CD14-positive monocyte (primary cell): ENCODE measurements at regions of chr17 and their contacts with region 1.

Region 1: DNA sequence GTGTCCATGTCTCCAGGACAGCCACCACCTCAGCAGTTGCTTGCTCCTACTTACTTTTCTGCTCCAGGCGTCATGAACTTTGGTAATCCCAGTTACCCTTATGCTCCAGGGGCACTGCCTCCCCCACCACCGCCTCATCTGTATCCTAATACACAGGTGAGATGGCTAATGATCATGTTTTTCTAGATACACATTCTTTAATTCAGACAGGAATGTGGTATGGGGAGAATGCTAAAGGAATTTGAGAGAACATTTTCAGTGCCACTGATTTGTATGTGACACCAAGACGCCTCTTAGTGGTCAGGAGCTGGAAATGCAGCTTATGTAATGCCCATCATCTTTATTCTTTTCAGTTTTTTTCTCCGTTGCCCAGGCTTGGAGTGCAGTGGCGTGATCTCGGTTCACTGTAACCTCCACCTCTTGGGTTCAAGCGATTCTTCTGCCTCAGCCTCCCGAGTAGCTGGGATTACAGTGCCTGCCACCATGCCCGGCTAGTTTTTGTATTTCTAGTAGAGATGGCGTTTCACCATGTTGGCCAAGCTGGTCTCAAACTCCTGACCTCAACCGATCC is 8.9 kb upstream of the RAPGEFL1 start:
- DNase-seq: peak; percentile 44 to 64 (median 62)
- H3K4me3 ChIP-seq: no peak overlapping the region
- H3K4me3 Mint-ChIP-seq: no peak overlapping the region
- H3K27ac ChIP-seq: peak overlapping the region; percentile 21 to 33
- H3K27ac Mint-ChIP-seq: peak overlapping the region in 6 of 7 donors; percentile 46 to 82 (median 80)
- H3K4me1 ChIP-seq: no peaks in the 10 kb centered on the region
- H3K4me1 Mint-ChIP-seq: peaks cover 2% of the 10 kb centered on the region
- H3K27me3 ChIP-seq: no peaks in the 10 kb centered on the region
- H3K27me3 Mint-ChIP-seq: no peaks in the 10 kb centered on the region
- CTCF ChIP-seq: peak; percentile 87

Region 2: GRCh38 chr17:40019140-40019991 is 149.0 kb before region 1 on chr17:
- intact Hi-C with region 1: loop called (anchors 5 to 10 kb)
- DNase-seq: no peak
- H3K4me3 ChIP-seq: no peak overlapping the region
- H3K4me3 Mint-ChIP-seq: no peak overlapping the region
- H3K27ac ChIP-seq: no peak overlapping the region
- H3K27ac Mint-ChIP-seq: peak overlapping the region in 4 of 7 donors; percentile 30 to 64 (median 48)
- H3K4me1 ChIP-seq: no peaks in the 10 kb centered on the region
- H3K4me1 Mint-ChIP-seq: peaks cover 1% of the 10 kb centered on the region
- H3K27me3 ChIP-seq: no peaks in the 10 kb centered on the region
- H3K27me3 Mint-ChIP-seq: peaks cover 2 to 12% (median 3%) of the 10 kb centered on the region in 3 donors
- CTCF ChIP-seq: no peak

Region 3: GRCh38 chr17:40062329-40063186 is 105.8 kb before region 1 on chr17 and contains the start of gene THRA:
- intact Hi-C with region 1: loop called (anchors 5 kb)
- DNase-seq: peak in 2 of 3 donors; percentile 54
- H3K4me3 ChIP-seq: peak within 1 kb of the TSS; percentile 76 to 94 (median 93)
- H3K4me3 Mint-ChIP-seq: peak within 1 kb of the TSS; percentile 84 to 90
- H3K27ac ChIP-seq: peak within 1 kb of the TSS; percentile 69 to 84
- H3K27ac Mint-ChIP-seq: peak within 1 kb of the TSS; percentile 77 to 92 (median 88)
- H3K4me1 ChIP-seq: peaks cover 26 to 45% of the 10 kb centered on the region in 2 donors
- H3K4me1 Mint-ChIP-seq: peaks cover 49% of the 10 kb centered on the region
- H3K27me3 ChIP-seq: peaks cover 0 to 4% of the 10 kb centered on the region in 2 donors
- H3K27me3 Mint-ChIP-seq: peaks cover 8 to 10% (median 9%) of the 10 kb centered on the region in 3 donors
- CTCF ChIP-seq: peak; percentile 11
- polyA plus RNA-seq, gene THRA: 2.5 to 7.5 (median 3.8) TPM